B cell (primary cell): ENCODE measurements at regions of chr3 and their contacts with region 1.

Region 1: GRCh38 chr3:46496741-46497554 is 828 bp upstream of the RTP3 start:
- DNase-seq: peak; percentile 55
- ATAC-seq: peak; percentile 54
- H3K4me3 ChIP-seq: no peak overlapping the region
- H3K4me3 Mint-ChIP-seq: no peak overlapping the region
- H3K27ac ChIP-seq: no peak overlapping the region
- H3K27ac Mint-ChIP-seq: no peak overlapping the region
- H3K4me1 ChIP-seq: peaks cover 23 to 26% of the 10 kb centered on the region in 2 donors
- H3K4me1 Mint-ChIP-seq: peaks cover 36% of the 10 kb centered on the region
- H3K27me3 ChIP-seq: no peaks in the 10 kb centered on the region
- H3K27me3 Mint-ChIP-seq: no peaks in the 10 kb centered on the region
- CTCF ChIP-seq: peak; percentile 38

Region 2: GRCh38 chr3:44939581-44940111 is 1557.3 kb before region 1 on chr3:
- CTCF ChIA-PET with region 1: no interaction called
- POLR2A ChIA-PET with region 1: no interaction called
- intact Hi-C with region 1: no loop called
- DNase-seq: no peak
- ATAC-seq: no peak
- H3K4me3 ChIP-seq: no peak overlapping the region
- H3K4me3 Mint-ChIP-seq: no peak overlapping the region
- H3K27ac ChIP-seq: no peak overlapping the region
- H3K27ac Mint-ChIP-seq: no peak overlapping the region
- H3K4me1 ChIP-seq: no peaks in the 10 kb centered on the region
- H3K4me1 Mint-ChIP-seq: no peaks in the 10 kb centered on the region
- H3K27me3 ChIP-seq: no peaks in the 10 kb centered on the region
- H3K27me3 Mint-ChIP-seq: no peaks in the 10 kb centered on the region
- CTCF ChIP-seq: no peak

Region 3: GRCh38 chr3:46549408-46549904 is 52.5 kb after region 1 on chr3:
- CTCF ChIA-PET with region 1: interaction called, 11 read pairs
- POLR2A ChIA-PET with region 1: no interaction called
- intact Hi-C with region 1: no loop called
- DNase-seq: peak; percentile 20
- ATAC-seq: peak; percentile 17
- H3K4me3 ChIP-seq: no peak overlapping the region
- H3K4me3 Mint-ChIP-seq: no peak overlapping the region
- H3K27ac ChIP-seq: no peak overlapping the region
- H3K27ac Mint-ChIP-seq: no peak overlapping the region
- H3K4me1 ChIP-seq: peaks cover 9 to 16% of the 10 kb centered on the region in 2 donors
- H3K4me1 Mint-ChIP-seq: peaks cover 34% of the 10 kb centered on the region
- H3K27me3 ChIP-seq: peaks cover 0 to 6% (median 0%) of the 10 kb centered on the region in 4 experiments
- H3K27me3 Mint-ChIP-seq: peaks cover 7% of the 10 kb centered on the region
- CTCF ChIP-seq: no peak

Region 4: DNA sequence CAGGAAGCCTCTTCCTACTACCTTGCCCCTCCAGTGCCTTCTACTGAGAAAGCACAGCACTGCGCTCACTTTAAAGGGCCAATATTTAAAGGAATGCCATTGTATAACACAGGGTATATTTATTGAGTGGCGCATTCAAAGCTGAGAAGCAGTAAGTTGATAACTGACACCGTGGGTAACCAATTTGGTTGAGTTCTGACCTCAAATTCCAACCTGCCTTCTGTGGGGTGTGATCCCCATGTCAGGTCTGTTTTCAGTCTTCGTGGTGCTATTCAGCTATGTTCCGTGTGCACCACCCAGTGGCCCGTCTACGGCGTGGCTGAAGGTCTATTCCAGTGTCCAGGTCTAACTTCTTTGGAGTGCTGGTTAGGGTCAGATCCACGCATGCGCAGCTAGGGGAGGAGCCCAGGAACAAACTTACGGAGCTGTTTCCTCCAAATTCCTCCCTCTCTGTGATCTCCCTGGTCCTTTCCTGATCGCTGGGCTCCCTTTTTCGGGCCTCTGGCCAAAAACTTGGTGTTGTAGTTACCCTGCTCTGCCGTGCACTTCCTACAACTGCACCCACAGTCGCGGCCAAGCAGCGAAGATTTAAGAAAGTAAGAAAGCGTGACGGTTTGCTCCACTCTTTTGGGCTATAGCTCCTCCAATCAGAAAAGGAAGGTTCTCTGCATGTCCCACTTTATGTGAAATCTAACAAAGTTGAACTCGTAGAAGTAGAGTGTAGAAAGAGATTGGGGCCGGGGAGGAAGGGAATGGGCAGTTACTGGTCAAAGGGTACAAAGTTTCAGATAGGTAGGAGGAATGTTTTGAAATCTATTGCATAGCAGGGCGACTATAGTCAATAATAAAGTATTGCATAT is 61.5 kb after region 1 on chr3:
- CTCF ChIA-PET with region 1: interaction called, 275 read pairs
- POLR2A ChIA-PET with region 1: interaction called, 8 read pairs
- intact Hi-C with region 1: loop called (anchors 2 kb)
- DNase-seq: peak; percentile 88
- ATAC-seq: peak; percentile 99
- H3K4me3 ChIP-seq: peak overlapping the region in 3 of 5 experiments; percentile 27 to 37 (median 37)
- H3K4me3 Mint-ChIP-seq: peak overlapping the region; percentile 74
- H3K27ac ChIP-seq: no peak overlapping the region
- H3K27ac Mint-ChIP-seq: peak overlapping the region; percentile 21
- H3K4me1 ChIP-seq: peaks cover 13% of the 10 kb centered on the region in 2 donors
- H3K4me1 Mint-ChIP-seq: peaks cover 14% of the 10 kb centered on the region
- H3K27me3 ChIP-seq: no peaks in the 10 kb centered on the region
- H3K27me3 Mint-ChIP-seq: peaks cover 6% of the 10 kb centered on the region
- CTCF ChIP-seq: peak; percentile 85